Activated CD4-positive, alpha-beta T cell treated with anti-CD3 and anti-CD28 coated beads for 36 hours (primary cell): ENCODE measurements at regions of chr19 and their contacts with region 1.

Region 1: DNA sequence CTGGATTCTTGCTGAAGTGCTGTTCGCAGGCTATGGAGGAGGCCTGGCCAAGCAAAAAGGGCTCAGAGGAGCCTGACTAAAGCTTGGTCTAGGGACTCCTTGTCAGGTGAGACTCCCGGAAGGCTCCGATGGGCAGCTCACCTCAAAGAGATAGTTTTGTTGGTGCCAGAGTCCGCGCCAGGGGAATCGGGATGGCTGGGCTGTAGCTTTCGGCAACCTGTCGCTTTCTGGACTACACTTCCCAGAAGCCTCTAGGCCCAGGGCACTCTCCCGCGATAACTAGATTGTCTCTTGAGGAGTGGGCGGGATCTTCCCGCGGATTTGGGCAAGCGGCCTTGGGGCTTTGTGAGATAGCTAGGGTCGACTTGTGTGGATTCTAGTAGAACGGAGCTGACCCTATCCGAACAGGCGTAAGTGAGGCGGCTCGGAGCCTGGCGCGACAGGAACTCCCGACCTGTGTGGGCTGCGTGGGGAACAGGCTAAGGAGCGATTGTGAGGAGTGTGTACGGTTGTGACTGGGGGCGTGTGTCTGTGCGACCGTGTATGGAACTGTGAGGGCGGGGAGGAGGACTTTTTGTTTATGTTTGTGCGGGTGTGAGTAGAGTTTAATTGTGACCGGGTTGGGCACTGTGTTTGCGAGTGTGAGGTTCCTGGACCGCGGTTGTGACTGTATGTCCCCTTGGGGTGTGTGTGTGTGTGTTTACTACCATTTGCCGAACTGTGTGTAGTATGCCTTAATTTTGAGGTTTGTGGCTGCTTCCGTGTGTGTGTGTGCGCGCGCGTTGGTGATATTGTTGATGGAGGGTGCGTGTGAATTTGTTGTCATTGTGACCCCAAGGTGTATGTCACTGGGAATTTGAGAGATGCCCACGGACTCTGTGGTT is at the start of gene ZNF345:
- DNase-seq: peak; percentile 91
- ATAC-seq: peak; percentile 82
- H3K4me3 Mint-ChIP-seq: no peak within 1 kb of the TSS
- H3K27ac Mint-ChIP-seq: no peak within 1 kb of the TSS
- H3K4me1 Mint-ChIP-seq: peaks cover 10% of the 10 kb centered on the region
- H3K27me3 Mint-ChIP-seq: no peaks in the 10 kb centered on the region
- total RNA-seq, gene ZNF345: 3.5 to 4.6 TPM

Region 2: DNA sequence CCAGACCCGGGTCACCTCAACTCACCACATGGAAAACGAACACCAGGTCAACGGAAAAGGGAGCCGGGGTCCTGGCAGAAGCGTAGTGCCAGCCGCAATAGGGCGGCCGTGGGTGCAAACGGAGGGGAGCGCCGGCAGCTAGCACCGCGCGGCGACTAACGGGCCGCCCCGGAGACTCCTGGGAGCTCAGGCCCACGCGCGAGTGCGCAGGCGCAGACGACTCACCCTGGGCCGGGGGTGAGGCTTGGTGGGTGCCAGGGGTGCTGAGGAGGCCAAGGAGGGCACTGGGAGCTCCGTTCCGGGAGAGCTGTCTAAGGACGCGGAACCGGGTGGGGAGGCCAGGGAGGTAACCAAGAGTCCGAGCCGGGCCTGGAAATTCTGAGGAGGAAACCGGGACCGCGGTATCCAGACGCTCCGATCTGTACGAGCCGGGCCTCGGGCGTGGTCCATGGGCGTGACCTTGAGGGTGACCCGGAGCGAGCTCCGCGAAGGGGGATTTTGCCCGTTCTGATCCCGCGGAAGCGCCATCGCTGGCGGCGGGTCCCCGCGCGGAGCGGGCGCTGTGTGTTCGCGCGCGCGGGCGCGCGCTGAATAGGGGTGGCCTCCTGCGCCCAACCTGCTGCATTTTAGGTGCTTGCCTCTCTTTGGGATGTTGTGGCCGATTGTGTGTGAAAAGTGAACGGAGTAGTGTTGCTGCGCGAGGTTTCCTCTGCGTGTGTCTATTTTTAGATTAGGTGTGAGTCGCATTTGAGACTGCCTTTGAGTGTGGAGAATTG is 245.5 kb before region 1 on chr19 and contains the start of gene ZNF382:
- CTCF ChIA-PET with region 1: no interaction called
- POLR2A ChIA-PET with region 1: no interaction called
- intact Hi-C with region 1: loop called in 1 of 2 experiments (anchors 1 kb)
- DNase-seq: peak; percentile 94
- ATAC-seq: peak; percentile 86
- H3K4me3 Mint-ChIP-seq: peak within 1 kb of the TSS; percentile 81
- H3K27ac Mint-ChIP-seq: peak within 1 kb of the TSS; percentile 91
- H3K4me1 Mint-ChIP-seq: peaks cover 20% of the 10 kb centered on the region
- H3K27me3 Mint-ChIP-seq: no peaks in the 10 kb centered on the region
- total RNA-seq, gene ZNF382: 14.9 to 20.0 TPM

Region 3: DNA sequence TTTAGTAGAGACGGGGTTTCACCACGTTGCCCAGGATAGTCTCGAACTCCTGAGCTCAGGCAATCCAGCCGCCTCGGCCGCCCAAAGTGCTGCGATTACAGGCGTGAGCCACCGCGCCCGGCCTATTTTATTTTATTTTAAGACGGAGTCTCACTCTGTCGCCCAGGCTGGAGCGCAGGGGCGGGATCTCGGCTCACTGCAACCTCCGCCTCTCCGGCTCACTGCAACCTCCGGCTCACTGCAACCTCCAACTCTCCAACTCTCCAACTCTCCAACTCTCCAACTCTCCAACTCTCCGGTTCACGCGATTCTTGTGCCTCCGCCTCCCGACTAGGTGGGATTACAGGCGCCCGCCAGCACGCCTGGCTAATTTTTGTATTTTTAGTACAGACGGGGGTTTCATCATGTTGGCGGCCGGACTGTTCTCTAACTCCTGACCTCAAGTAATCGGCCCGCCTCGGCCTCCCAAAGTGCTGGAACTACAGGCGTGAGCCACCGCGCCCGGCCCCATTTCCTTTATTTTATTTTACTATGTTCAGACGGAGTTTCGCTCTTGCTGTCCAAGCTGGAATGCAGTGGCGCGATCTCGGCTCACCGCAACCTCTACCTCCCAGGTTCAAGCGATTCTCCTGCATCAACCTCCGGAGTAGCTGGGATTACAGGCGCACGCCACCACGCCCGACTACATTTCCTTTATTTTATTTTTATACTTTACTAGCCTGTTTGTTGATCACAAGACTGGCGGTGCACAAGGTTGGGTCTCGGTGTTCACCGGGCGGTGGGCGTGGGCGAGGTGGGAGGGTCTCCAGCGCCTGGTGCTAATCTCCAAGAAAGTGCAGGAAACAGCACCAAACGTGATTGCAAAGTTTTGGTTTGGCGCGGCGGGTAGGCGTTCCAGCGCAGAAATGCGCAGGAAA is 54.5 kb before region 1 on chr19:
- CTCF ChIA-PET with region 1: no interaction called
- POLR2A ChIA-PET with region 1: interaction called, 3 read pairs
- intact Hi-C with region 1: loop called in 1 of 2 experiments (anchors 1 kb)
- DNase-seq: no peak
- ATAC-seq: no peak
- H3K4me3 Mint-ChIP-seq: peak overlapping the region; percentile 83
- H3K27ac Mint-ChIP-seq: peak overlapping the region; percentile 92
- H3K4me1 Mint-ChIP-seq: peaks cover 14% of the 10 kb centered on the region
- H3K27me3 Mint-ChIP-seq: peaks cover 4% of the 10 kb centered on the region

Region 4: GRCh38 chr19:36963280-36963679 is 112.5 kb after region 1 on chr19:
- CTCF ChIA-PET with region 1: no interaction called
- POLR2A ChIA-PET with region 1: no interaction called
- intact Hi-C with region 1: no loop called
- DNase-seq: no peak
- ATAC-seq: no peak
- H3K4me3 Mint-ChIP-seq: no peak overlapping the region
- H3K27ac Mint-ChIP-seq: no peak overlapping the region
- H3K4me1 Mint-ChIP-seq: no peaks in the 10 kb centered on the region
- H3K27me3 Mint-ChIP-seq: no peaks in the 10 kb centered on the region

Region 5: GRCh38 chr19:37217855-37218591 is 367.2 kb after region 1 on chr19 and contains the start of gene ZNF383:
- CTCF ChIA-PET with region 1: interaction called, 4 read pairs
- POLR2A ChIA-PET with region 1: no interaction called
- intact Hi-C with region 1: loop called in 1 of 2 experiments (anchors 2 kb)
- DNase-seq: peak; percentile 89
- ATAC-seq: peak; percentile 87
- H3K4me3 Mint-ChIP-seq: peak within 1 kb of the TSS; percentile 93
- H3K27ac Mint-ChIP-seq: peak within 1 kb of the TSS; percentile 99
- H3K4me1 Mint-ChIP-seq: peaks cover 24% of the 10 kb centered on the region
- H3K27me3 Mint-ChIP-seq: no peaks in the 10 kb centered on the region
- total RNA-seq, gene ZNF383: 8.5 to 9.2 TPM